ENCODE measurements at regions of chr15 and their contacts with region 1.

Region 1: GRCh38 chr15:75801859-75802593 is 41.2 kb upstream of the UBE2Q2 start:
- DNase-seq: peak; percentile 88
- ATAC-seq: peak; percentile 98

Region 2: GRCh38 chr15:75738647-75739331 is 63.2 kb before region 1 on chr15:
- intact Hi-C with region 1: loop called (anchors 10 kb)
- DNase-seq: peak; percentile 97
- ATAC-seq: peak; percentile 99

Region 3: GRCh38 chr15:76391847-76392246 is 589.8 kb after region 1 on chr15:
- intact Hi-C with region 1: no loop called
- DNase-seq: no peak
- ATAC-seq: no peak

Region 4: GRCh38 chr15:76431971-76432370 is 629.9 kb after region 1 on chr15:
- intact Hi-C with region 1: no loop called
- DNase-seq: no peak
- ATAC-seq: peak; percentile 55